ENCODE measurements at regions of chr15 and their contacts with region 1.

Region 1: GRCh38 chr15:98873441-98874201 is 134.0 kb downstream of the PGPEP1L start:
- DNase-seq: peak in 1 of 3 donors; percentile 46
- ATAC-seq: no peak
- H3K4me3 ChIP-seq: no peak overlapping the region
- H3K27ac ChIP-seq: peak overlapping the region; percentile 66
- H3K4me1 ChIP-seq: peaks cover 15% of the 10 kb centered on the region
- H3K27me3 ChIP-seq: no peaks in the 10 kb centered on the region

Region 2: GRCh38 chr15:99068186-99068585 is 194.6 kb after region 1 on chr15:
- intact Hi-C with region 1: loop called in 1 of 4 experiments (anchors 10 kb)
- DNase-seq: no peak
- ATAC-seq: no peak
- H3K4me3 ChIP-seq: no peak overlapping the region
- H3K27ac ChIP-seq: no peak overlapping the region
- H3K4me1 ChIP-seq: no peaks in the 10 kb centered on the region
- H3K27me3 ChIP-seq: no peaks in the 10 kb centered on the region

Region 3: DNA sequence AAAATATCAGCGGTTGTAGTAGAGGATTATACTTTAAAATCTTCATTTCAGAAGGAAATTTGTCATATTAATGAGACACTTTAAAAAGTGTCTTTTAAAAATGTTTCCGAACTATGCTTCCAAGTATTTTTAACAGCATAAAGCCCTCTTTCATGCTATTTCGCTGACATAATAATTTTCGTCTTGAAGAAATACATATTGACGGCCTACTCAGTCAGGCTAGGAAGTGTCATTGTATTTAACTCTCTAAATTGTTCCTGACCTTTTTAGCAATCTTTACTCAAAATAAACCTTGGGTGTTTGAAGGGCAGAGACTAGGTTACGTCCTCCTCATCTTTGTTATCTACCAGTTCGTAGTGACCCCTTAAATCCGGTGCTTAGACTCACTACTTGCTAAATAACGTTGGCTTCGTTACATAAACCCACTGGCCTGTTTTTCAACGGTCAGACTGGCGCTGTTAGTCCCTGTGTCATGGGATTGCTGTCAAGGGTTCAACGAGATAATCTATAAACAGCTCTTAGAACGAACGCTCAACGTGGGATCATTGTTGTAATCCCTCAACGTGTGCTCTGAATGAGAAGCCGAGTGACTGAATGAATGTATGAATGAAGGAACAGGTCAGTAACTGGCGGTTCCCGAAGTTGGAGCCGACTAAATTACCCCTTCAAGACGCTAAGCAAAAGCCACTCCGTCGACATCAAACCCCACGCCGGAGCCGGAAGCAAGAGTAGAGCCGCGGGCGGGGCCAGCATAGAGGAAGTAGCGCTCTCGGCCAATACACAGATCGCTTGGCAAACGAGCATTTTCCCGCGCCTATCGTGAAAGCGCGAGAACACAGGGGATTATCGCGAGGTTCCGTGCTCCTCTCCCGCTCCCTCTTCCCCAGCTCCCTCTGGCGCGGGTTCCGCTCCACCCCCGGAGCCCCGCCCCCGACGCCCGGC is 377.1 kb after region 1 on chr15:
- intact Hi-C with region 1: no loop called
- DNase-seq: peak; percentile 98 to 99 (median 99)
- ATAC-seq: peak; percentile 95 to 96
- H3K4me3 ChIP-seq: peak overlapping the region; percentile 100
- H3K27ac ChIP-seq: peak overlapping the region; percentile 100
- H3K4me1 ChIP-seq: peaks cover 3% of the 10 kb centered on the region
- H3K27me3 ChIP-seq: no peaks in the 10 kb centered on the region